ENCODE measurements at regions of chr10 and their contacts with region 1.

Region 1: GRCh38 chr10:102225646-102226541 is at the start of gene ELOVL3:
- DNase-seq: peak; percentile 87
- H3K4me3 Mint-ChIP-seq: peak within 1 kb of the TSS; percentile 48
- H3K27ac Mint-ChIP-seq: no peak within 1 kb of the TSS
- H3K4me1 Mint-ChIP-seq: peaks cover 11% of the 10 kb centered on the region
- H3K27me3 Mint-ChIP-seq: peaks cover 33% of the 10 kb centered on the region
- total RNA-seq, gene ELOVL3: not detected

Region 2: GRCh38 chr10:100419911-100420449 is 1805.9 kb before region 1 on chr10:
- CTCF ChIA-PET with region 1: no interaction called
- intact Hi-C with region 1: no loop called
- DNase-seq: no peak
- H3K4me3 Mint-ChIP-seq: no peak overlapping the region
- H3K27ac Mint-ChIP-seq: no peak overlapping the region
- H3K4me1 Mint-ChIP-seq: no peaks in the 10 kb centered on the region
- H3K27me3 Mint-ChIP-seq: no peaks in the 10 kb centered on the region

Region 3: GRCh38 chr10:102167861-102168260 is 58.0 kb before region 1 on chr10:
- CTCF ChIA-PET with region 1: interaction called, 40 read pairs
- intact Hi-C with region 1: loop called (anchors 1 kb)
- DNase-seq: no peak
- H3K4me3 Mint-ChIP-seq: no peak overlapping the region
- H3K27ac Mint-ChIP-seq: no peak overlapping the region
- H3K4me1 Mint-ChIP-seq: peaks cover 10% of the 10 kb centered on the region
- H3K27me3 Mint-ChIP-seq: no peaks in the 10 kb centered on the region

Region 4: DNA sequence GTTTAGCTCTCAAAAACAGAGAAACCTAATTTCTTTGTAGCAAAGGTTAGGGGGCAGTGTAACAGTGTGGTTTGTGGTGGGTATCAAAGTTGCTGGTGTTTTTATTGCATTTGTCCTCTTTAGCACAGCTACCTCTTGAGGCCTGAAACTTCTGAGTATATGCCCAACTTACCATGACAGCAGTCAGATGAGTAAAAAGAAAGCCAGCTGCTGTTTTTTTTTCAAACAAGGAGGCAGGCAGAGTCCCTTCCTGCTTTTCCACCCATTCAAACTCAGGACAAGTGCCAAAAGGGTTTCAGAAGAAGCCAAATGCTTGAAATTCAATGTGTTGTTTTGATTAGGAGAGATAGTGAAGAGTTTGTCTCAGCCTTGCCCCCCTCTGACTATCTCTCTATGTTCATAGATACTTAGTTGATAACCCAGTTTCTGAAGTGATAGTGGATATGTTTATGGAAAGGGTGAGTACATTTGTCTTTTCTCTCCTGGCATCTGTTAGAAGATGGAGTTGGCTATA is 42.5 kb after region 1 on chr10:
- CTCF ChIA-PET with region 1: interaction called, 18 read pairs
- intact Hi-C with region 1: no loop called
- DNase-seq: no peak
- H3K4me3 Mint-ChIP-seq: no peak overlapping the region
- H3K27ac Mint-ChIP-seq: peak overlapping the region; percentile 87
- H3K4me1 Mint-ChIP-seq: peaks cover 65% of the 10 kb centered on the region
- H3K27me3 Mint-ChIP-seq: no peaks in the 10 kb centered on the region

Region 5: GRCh38 chr10:102342958-102343357 is 117.1 kb after region 1 on chr10:
- CTCF ChIA-PET with region 1: interaction called, 685 read pairs
- intact Hi-C with region 1: loop called (anchors 1 kb)
- DNase-seq: no peak
- H3K4me3 Mint-ChIP-seq: no peak overlapping the region
- H3K27ac Mint-ChIP-seq: no peak overlapping the region
- H3K4me1 Mint-ChIP-seq: peaks cover 31% of the 10 kb centered on the region
- H3K27me3 Mint-ChIP-seq: no peaks in the 10 kb centered on the region

Region 6: DNA sequence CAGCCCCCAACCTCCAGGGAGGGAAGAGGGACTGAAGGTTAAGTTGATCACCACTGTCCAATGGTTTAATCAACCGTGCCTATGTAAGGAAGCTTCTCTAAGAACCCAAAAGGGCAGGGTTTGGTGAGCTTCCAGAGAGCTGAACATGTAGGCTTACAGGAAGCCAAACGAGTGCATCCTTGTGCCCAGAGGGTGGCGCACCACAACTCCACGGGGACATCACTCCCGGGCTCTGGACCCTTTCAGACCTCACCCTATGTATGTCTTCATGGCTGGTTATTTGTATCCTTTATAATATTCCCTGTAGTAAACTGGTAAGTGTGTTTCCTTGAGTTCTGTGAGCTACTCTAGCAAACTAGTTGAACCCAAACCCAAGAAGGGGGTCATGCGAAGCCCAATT is 158.2 kb after region 1 on chr10:
- CTCF ChIA-PET with region 1: interaction called, 43 read pairs
- intact Hi-C with region 1: no loop called
- DNase-seq: peak; percentile 49
- H3K4me3 Mint-ChIP-seq: no peak overlapping the region
- H3K27ac Mint-ChIP-seq: no peak overlapping the region
- H3K4me1 Mint-ChIP-seq: peaks cover 10% of the 10 kb centered on the region
- H3K27me3 Mint-ChIP-seq: no peaks in the 10 kb centered on the region

Region 7: DNA sequence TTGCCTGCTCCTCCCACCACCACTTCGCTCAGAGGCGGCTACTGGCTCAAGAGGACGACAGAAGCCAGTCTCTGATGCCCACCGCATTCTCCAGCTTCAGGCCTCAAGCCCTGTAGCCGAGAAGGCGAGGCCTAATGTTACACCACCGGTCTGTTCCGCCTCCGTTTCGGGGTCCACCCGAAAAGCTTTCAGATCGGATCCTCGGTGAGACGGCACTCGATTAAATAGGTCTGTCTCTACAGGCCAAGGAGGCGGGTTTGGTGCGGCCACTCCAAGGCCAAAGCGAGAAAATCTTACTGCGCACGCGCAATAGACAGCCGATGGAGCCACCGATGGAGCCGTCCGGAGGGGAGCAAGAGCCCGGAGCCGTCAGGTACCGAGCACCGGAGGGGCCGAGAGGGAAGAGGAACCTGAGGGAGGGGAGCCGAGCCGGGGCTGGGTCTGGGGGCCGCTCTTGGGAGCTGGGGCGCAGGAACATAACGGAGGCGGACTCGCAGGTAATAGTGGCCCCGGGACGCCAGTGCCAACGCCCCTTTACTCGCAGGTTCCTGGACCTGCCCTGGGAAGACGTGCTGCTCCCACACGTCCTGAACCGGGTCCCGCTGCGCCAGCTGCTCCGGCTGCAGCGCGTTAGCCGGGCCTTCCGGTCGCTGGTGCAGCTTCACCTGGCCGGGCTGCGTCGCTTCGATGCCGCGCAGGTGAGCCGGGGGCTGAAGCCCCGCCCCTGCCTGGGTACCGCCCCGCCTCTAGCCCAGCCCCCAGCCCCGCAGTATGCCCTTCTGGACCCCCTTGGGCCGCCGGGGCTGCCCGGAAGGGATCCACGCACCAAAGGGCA is 195.1 kb after region 1 on chr10 and contains the start of gene FBXL15:
- CTCF ChIA-PET with region 1: interaction called, 49 read pairs
- intact Hi-C with region 1: loop called (anchors 1 kb)
- DNase-seq: peak; percentile 98
- H3K4me3 Mint-ChIP-seq: peak within 1 kb of the TSS; percentile 95
- H3K27ac Mint-ChIP-seq: peak within 1 kb of the TSS; percentile 91
- H3K4me1 Mint-ChIP-seq: peaks cover 30% of the 10 kb centered on the region
- H3K27me3 Mint-ChIP-seq: peaks cover 20% of the 10 kb centered on the region
- total RNA-seq, gene FBXL15: 9.9 to 10.8 TPM

Region 8: GRCh38 chr10:102583435-102584417 is 357.8 kb after region 1 on chr10:
- CTCF ChIA-PET with region 1: interaction called, 15 read pairs
- intact Hi-C with region 1: loop called (anchors 2 kb)
- DNase-seq: peak; percentile 94
- H3K4me3 Mint-ChIP-seq: no peak overlapping the region
- H3K27ac Mint-ChIP-seq: no peak overlapping the region
- H3K4me1 Mint-ChIP-seq: peaks cover 5% of the 10 kb centered on the region
- H3K27me3 Mint-ChIP-seq: no peaks in the 10 kb centered on the region

Measured in activated naive CD4-positive, alpha-beta T cell treated with anti-CD3 and anti-CD28 coated beads for 36 hours (primary cell).